Ascending aorta (tissue), 2 donors: ENCODE measurements at regions of chr20 and their contacts with region 1.

Region 1: DNA sequence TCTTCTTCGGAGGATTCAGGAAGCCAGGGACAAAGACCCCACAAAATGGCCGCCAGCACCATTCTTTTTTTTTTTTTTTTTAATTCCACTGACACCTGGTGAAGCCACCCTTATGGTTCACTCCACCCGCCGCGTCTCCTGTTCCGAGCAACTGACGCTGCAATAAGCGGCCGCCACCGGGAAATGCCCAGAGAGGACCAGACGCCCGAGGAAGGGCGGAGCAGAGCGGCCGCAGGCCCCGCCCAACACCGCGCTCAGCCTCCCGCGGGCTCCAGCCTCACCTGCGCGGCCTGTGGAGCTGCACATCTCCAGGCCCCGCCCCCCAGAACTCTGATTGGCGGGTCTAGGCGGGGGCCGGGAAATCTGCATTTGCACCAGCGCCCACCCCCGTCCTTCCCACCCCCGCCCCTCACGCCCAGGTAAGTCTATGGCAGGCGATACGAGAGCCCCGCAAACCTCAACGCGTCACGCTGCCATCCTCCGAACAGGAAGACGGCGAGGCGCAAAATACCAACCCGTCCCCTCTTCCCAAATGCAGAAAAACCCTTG is 1.1 kb downstream of the ATP9A start:
- DNase-seq: peak; percentile 24 to 77
- H3K4me3 ChIP-seq: peak overlapping the region; percentile 64 to 87
- H3K27ac ChIP-seq: peak overlapping the region; percentile 52 to 80
- H3K4me1 ChIP-seq: no peaks in the 10 kb centered on the region
- H3K27me3 ChIP-seq: no peaks in the 10 kb centered on the region
- CTCF ChIP-seq: no peak

Region 2: DNA sequence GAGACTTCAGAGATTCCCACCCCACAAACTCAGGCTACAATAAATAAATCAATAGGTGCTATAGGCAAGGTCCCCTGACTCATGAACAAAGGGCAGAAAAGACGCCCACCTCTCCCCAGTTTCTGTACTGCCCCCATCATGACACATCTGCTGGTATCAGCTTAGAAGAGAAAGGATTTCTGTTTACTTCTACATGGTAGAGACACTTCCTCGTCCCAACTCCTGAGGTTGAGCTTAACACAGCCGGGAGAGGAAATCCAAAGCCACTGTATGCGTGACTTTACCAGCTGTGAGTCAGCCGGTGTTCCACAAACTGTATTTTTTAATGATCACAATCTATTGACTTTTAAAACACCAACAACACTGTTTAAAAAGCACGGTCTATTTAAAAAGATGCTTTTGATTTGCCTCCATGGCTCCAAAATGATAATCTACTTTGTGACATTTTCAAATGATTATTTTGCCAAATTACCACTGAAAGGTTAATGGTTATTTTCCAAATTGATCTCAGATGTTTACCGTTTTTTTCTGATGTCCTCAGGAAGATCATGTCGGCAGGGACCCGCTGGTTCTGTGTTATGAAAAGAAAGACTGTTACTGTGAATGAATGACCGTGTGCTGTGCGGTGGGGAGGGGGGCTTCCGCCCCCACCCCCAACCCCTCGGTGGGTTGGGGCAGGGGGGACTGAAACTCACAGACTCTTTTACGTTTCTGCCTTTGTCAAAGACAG is 71.3 kb before region 1 on chr20:
- intact Hi-C with region 1: loop called (anchors 2 kb)
- DNase-seq: no peak
- H3K4me3 ChIP-seq: no peak overlapping the region
- H3K27ac ChIP-seq: no peak overlapping the region
- H3K4me1 ChIP-seq: peaks cover 0 to 16% of the 10 kb centered on the region in 2 donors
- H3K27me3 ChIP-seq: no peaks in the 10 kb centered on the region
- CTCF ChIP-seq: no peak

Region 3: DNA sequence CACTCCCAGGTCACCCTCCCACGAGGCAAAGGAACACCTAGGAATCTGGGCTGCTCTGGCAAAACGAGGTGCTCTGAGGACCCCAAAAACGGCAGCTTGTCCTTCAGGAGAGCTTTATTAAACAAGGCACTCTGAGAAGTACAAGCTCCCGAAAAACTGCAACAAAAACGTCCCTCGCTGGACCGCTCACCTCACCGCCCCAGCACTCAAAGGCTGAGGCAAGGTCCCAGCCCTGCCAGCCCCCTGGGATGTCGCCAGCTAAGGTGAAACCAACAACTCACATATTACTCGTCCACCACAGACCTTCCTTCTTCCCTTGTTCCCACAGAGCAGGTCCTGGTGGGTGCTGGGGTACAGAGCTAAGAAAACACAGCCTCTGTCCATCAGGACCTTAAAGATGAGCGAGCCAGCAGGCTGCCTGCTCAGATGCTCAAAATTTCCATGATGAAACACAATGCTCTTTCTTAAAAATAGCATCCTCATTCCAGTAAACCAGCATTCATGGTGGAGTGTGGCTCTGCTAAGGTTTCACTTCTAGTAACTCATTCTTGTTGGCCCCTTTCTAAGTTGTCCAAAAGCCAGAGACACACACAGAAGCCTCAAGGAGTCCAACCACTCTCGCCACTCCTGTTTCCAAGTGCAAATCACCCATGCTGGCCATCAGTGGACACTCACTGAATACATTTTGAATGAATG is 34.8 kb before region 1 on chr20:
- intact Hi-C with region 1: loop called (anchors 5 kb)
- DNase-seq: no peak
- H3K4me3 ChIP-seq: peak overlapping the region in 1 of 2 donors; percentile 33
- H3K27ac ChIP-seq: peak overlapping the region; percentile 34 to 66
- H3K4me1 ChIP-seq: peaks cover 3 to 5% of the 10 kb centered on the region in 2 donors
- H3K27me3 ChIP-seq: no peaks in the 10 kb centered on the region
- CTCF ChIP-seq: no peak

Region 4: DNA sequence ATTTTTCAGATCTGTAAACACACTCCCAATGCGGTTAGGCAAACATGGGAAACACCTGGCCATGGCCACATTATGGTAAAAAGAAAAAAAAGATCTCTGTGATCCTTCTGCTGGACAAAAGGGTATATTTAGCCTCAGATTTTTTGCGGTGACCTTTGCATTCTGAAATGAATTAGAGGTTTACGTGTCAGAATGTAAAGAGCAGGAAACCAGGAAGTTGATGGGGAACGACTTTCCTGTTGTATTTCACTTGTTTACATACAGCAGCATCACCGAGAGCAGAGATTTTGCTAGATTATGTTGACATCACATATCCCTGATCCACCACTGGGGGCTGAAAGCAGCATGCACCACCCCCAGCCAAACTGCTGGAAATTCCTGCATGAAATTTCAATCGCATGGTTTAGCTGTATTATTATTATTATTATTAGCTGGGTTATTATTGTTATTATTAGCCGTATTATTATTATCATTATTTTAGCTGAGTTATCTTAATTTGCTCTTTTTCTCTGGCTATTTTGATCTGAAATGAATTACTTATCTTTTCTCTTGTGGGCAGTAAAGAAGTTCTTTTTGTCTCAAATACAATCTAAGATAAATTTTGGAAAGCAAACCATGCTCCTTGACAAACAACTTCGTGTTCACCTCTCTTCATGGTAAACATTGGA is 235.0 kb after region 1 on chr20:
- intact Hi-C with region 1: no loop called
- DNase-seq: no peak
- H3K4me3 ChIP-seq: no peak overlapping the region
- H3K27ac ChIP-seq: no peak overlapping the region
- H3K4me1 ChIP-seq: no peaks in the 10 kb centered on the region
- H3K27me3 ChIP-seq: no peaks in the 10 kb centered on the region
- CTCF ChIP-seq: no peak